Aorta (tissue), 5 donors: ENCODE measurements at regions of chr9 and their contacts with region 1.

Region 1: DNA sequence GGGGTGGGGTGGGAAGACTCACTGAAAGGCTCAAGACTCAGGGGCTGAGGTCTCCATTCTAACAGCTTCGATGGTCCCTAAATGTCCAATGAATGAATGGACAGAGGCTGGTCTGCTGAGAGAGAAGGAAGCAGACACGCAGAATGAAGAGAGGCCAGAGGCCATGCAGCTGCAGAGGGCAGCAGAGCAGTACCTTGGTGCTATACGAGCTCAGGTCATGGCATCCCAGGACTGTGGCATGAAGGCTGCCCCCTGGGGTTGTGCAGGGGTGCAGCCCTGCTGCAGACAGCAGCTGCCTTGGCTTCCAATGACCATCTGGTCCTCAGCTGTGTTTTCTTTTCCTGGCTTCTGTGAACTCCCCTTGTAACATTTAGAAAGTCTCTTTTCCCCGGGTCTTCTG is 15.2 kb upstream of the CORO2A start:
- DNase-seq: no peak
- ATAC-seq: no peak
- H3K4me3 ChIP-seq: no peak overlapping the region
- H3K27ac ChIP-seq: no peak overlapping the region
- H3K4me1 ChIP-seq: no peaks in the 10 kb centered on the region
- H3K27me3 ChIP-seq: no peaks in the 10 kb centered on the region

Region 2: GRCh38 chr9:98263482-98264357 is 56.1 kb after region 1 on chr9:
- intact Hi-C with region 1: loop called (anchors 2 to 5 kb)
- DNase-seq: peak; percentile 86 to 91
- ATAC-seq: peak; percentile 80
- H3K4me3 ChIP-seq: no peak overlapping the region
- H3K27ac ChIP-seq: no peak overlapping the region
- H3K4me1 ChIP-seq: no peaks in the 10 kb centered on the region
- H3K27me3 ChIP-seq: no peaks in the 10 kb centered on the region